Posterior vena cava (tissue), 2 donors: ENCODE measurements at regions of chr3 and their contacts with region 1.

Region 1: GRCh38 chr3:194884649-194885315 is 199.1 kb downstream of the FAM43A start:
- DNase-seq: no peak

Region 2: DNA sequence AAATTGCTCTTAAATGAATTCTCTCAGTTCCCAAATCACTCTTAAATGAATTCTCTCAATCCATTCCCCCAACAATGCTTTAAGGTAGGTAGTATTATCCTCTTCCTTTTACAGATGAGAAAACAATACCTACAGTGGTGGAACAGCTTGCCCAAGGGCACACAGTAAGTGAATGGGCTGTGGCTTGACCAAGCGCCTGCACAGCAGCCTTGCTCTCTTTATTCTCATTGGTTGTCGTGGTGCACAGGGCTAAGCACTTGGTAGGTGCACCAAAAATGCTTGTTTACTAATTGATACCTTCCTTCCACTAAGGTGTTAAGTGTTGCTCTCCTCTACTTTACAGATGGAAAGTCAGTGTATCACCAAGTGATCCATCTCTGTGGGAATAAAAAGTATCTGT is 155.8 kb before region 1 on chr3:
- intact Hi-C with region 1: loop called in 1 of 2 experiments (anchors 1 kb)
- DNase-seq: no peak

Region 3: GRCh38 chr3:195001961-195002861 is 117.4 kb after region 1 on chr3:
- intact Hi-C with region 1: no loop called
- DNase-seq: peak; percentile 79